Heart right ventricle (tissue), 16 donors: ENCODE measurements at regions of chr3 and their contacts with region 1.

Region 1: DNA sequence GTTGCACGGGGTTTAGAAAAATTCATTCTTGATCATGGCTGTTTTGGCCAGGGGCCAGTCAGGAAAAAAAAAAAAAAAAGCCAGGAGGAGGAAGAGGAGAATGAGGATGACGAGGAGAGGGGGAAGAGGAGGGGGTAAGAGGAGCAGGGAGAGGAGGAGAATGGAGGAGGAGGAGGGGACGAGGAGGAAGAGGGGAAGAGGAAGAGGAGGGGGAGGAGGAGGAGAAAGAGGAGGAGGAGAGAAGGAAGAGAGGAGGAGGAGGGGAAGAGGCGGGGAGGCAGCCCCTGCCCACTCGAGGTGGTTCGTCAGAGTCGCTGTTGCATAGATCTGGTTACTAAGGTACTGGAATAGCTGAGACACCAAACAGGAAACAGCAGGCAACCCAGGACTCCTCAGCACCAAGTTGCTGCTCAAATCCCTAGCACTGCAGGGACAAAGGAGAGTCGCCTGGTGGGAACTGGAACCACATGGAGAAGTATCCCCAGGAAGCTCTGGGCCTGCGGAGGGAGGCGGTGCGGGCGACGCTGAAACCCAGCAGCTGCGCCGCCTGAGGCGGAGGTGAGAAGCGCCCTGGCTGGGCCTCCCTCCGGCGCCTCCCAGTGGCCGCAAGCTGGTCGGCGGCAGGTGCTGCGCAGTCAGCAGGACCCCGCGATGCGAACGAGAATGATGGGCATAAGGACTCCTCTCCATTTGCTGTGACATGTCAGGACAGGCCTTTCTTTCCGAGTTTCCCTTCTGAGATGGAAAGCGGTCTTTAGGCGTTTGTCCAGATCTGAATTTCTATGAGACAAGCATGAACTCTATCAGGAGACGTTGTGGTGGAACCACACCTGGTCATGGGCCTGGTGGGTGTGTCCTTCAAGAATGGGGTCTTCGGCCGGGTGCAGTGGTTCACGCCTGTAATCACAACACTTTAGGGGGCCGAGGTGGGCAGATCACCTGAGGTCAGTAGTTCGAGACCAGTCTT is 17.5 kb downstream of the FAM240A start:
- DNase-seq: peak; percentile 74 to 86
- ATAC-seq: peak; percentile 89 to 97 (median 93)
- H3K4me3 ChIP-seq: peak overlapping the region in 8 of 10 donors; percentile 9 to 50 (median 42)
- H3K27ac ChIP-seq: peak overlapping the region; percentile 36 to 79 (median 66)
- H3K4me1 ChIP-seq: peaks cover 0 to 26% (median 7%) of the 10 kb centered on the region in 9 donors
- H3K27me3 ChIP-seq: no peaks in the 10 kb centered on the region
- CTCF ChIP-seq: peak; percentile 92 to 100 (median 96)

Region 2: DNA sequence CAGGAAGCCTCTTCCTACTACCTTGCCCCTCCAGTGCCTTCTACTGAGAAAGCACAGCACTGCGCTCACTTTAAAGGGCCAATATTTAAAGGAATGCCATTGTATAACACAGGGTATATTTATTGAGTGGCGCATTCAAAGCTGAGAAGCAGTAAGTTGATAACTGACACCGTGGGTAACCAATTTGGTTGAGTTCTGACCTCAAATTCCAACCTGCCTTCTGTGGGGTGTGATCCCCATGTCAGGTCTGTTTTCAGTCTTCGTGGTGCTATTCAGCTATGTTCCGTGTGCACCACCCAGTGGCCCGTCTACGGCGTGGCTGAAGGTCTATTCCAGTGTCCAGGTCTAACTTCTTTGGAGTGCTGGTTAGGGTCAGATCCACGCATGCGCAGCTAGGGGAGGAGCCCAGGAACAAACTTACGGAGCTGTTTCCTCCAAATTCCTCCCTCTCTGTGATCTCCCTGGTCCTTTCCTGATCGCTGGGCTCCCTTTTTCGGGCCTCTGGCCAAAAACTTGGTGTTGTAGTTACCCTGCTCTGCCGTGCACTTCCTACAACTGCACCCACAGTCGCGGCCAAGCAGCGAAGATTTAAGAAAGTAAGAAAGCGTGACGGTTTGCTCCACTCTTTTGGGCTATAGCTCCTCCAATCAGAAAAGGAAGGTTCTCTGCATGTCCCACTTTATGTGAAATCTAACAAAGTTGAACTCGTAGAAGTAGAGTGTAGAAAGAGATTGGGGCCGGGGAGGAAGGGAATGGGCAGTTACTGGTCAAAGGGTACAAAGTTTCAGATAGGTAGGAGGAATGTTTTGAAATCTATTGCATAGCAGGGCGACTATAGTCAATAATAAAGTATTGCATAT is 71.4 kb before region 1 on chr3:
- intact Hi-C with region 1: loop called in 4 of 10 experiments (anchors 5 to 10 kb)
- DNase-seq: peak; percentile 81 to 82
- ATAC-seq: peak; percentile 83 to 96 (median 90)
- H3K4me3 ChIP-seq: peak overlapping the region in 9 of 10 donors; percentile 24 to 63 (median 41)
- H3K27ac ChIP-seq: peak overlapping the region in 9 of 10 donors; percentile 53 to 98 (median 69)
- H3K4me1 ChIP-seq: peaks cover 3 to 62% (median 23%) of the 10 kb centered on the region in 9 donors
- H3K27me3 ChIP-seq: no peaks in the 10 kb centered on the region
- CTCF ChIP-seq: peak in 8 of 9 donors; percentile 36 to 91 (median 65)

Region 3: GRCh38 chr3:46566036-46566641 is 63.7 kb before region 1 on chr3 and contains the start of gene LRRC2:
- intact Hi-C with region 1: loop called in 5 of 10 experiments (anchors 5 to 10 kb)
- DNase-seq: peak; percentile 66 to 73
- ATAC-seq: peak; percentile 68 to 86 (median 76)
- H3K4me3 ChIP-seq: peak within 1 kb of the TSS; percentile 43 to 77 (median 66)
- H3K27ac ChIP-seq: peak within 1 kb of the TSS; percentile 84 to 98 (median 92)
- H3K4me1 ChIP-seq: peaks cover 0 to 40% (median 14%) of the 10 kb centered on the region in 9 donors
- H3K27me3 ChIP-seq: peaks cover 0 to 27% (median 0%) of the 10 kb centered on the region in 7 donors
- CTCF ChIP-seq: no peak
- total RNA-seq, gene LRRC2: 103 to 163 (median 128) TPM

Region 4: GRCh38 chr3:46574243-46574646 is 55.6 kb before region 1 on chr3:
- intact Hi-C with region 1: loop called in 3 of 10 experiments (anchors 5 to 10 kb)
- DNase-seq: no peak
- ATAC-seq: peak in 1 of 8 donors; percentile 49
- H3K4me3 ChIP-seq: no peak overlapping the region
- H3K27ac ChIP-seq: no peak overlapping the region
- H3K4me1 ChIP-seq: peaks cover 0 to 23% (median 8%) of the 10 kb centered on the region in 9 donors
- H3K27me3 ChIP-seq: peaks cover 0 to 20% (median 6%) of the 10 kb centered on the region in 7 donors
- CTCF ChIP-seq: no peak

Region 5: GRCh38 chr3:46681856-46682540 is 52.2 kb after region 1 on chr3:
- intact Hi-C with region 1: no loop called
- DNase-seq: no peak
- ATAC-seq: no peak
- H3K4me3 ChIP-seq: no peak overlapping the region
- H3K27ac ChIP-seq: no peak overlapping the region
- H3K4me1 ChIP-seq: peaks cover 0 to 27% (median 19%) of the 10 kb centered on the region in 9 donors
- H3K27me3 ChIP-seq: no peaks in the 10 kb centered on the region
- CTCF ChIP-seq: no peak